Activated CD8-positive, alpha-beta memory T cell treated with anti-CD3 and anti-CD28 coated beads, Interleukin-2, amount 10 ng/mL, durations not matched to agents 7 days and 5 days (primary cell): ENCODE measurements at regions of chr13 and their contacts with region 1.

Region 1: DNA sequence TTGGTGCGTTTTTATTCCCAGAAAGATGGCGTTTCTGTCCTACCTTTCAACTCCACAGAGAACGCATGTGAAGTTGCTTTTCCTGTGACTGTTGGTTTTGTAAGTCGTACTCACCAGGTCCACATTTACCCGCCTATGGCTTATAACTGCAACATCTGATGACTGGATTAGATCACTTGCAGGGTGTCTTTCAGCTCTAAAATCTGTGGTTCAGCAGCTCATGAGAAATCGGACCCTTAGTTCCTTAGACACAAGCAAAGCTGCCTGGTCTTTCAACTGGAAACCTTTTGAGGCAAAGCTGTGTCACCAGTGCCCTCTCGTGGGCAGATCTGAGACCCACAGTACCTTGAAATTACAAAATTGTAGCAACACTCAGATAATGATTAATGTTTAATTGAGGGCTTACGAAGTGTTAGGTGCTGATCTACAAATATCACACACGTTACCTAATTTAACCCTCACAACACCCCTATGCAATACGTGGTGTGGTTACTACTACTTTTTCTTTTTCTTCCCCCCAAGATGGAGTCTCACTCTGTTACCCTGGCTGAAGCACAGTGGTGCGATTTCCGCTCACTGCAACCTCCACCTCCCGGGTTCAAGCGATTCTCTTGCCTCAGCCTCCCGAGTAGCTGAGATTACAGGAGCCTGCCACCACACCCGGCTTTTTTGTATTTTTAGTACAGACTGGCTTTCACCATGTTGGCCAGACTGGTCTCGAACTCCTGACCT is 65.4 kb downstream of the RUBCNL start:
- DNase-seq: peak; percentile 83
- ATAC-seq: peak; percentile 88
- H3K4me3 Mint-ChIP-seq: peak overlapping the region; percentile 62
- H3K27ac Mint-ChIP-seq: peak overlapping the region; percentile 87
- H3K4me1 Mint-ChIP-seq: peaks cover 18% of the 10 kb centered on the region
- H3K27me3 Mint-ChIP-seq: no peaks in the 10 kb centered on the region

Region 2: GRCh38 chr13:45807520-45808099 is 514.0 kb before region 1 on chr13:
- CTCF ChIA-PET with region 1: interaction called, 10 read pairs
- DNase-seq: peak; percentile 51
- ATAC-seq: peak; percentile 53
- H3K4me3 Mint-ChIP-seq: no peak overlapping the region
- H3K27ac Mint-ChIP-seq: no peak overlapping the region
- H3K4me1 Mint-ChIP-seq: peaks cover 4% of the 10 kb centered on the region
- H3K27me3 Mint-ChIP-seq: no peaks in the 10 kb centered on the region

Region 3: DNA sequence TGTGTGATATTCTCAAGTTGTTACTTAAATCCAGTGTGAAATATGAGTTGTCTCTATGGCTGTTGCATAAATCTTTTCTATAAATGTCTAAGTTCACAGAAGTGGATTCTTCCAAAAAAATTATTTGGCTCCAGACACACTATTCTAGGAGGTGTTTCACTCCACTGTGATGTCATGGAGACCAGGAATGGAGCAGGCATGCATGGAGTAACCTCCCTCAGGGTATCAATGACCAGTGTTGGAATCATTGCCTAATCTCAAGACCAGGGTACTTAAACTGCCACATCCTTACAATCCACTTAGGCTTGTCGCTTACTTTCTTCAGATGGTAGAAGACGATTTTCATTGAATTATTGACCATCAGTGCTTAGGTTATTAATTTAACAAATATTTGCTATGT is 54.5 kb before region 1 on chr13:
- CTCF ChIA-PET with region 1: no interaction called
- DNase-seq: no peak
- ATAC-seq: no peak
- H3K4me3 Mint-ChIP-seq: no peak overlapping the region
- H3K27ac Mint-ChIP-seq: no peak overlapping the region
- H3K4me1 Mint-ChIP-seq: no peaks in the 10 kb centered on the region
- H3K27me3 Mint-ChIP-seq: peaks cover 11% of the 10 kb centered on the region

Region 4: DNA sequence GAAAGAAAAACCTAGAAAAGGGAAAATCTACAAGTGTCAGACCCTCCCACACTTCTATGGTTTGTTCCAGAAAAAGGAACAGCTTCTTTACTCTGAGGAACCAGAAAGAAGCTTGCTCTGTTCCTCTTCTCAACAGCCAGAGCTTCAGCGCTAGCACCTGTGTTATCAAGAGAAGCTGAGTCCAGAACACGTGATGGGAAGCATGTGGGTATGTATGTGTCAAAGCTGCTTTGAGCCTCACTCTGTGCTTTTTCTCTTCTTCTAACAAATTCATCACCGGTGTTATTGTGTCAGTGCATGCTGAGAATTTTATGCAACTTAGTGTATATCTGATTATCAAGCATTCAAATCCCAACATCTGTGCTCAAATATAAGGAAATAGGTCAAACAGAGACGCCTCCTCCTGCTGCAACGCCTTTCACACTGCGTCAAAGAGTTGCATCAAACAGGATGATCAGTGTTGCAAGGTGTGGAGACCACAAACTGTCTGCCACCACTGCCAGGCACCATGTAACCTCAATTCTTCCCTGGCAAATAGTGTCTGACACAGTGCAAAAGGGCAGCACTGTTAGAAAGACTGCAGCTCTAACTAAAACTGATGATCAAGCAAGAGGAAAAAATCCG is 26.1 kb before region 1 on chr13:
- CTCF ChIA-PET with region 1: interaction called, 11 read pairs
- DNase-seq: peak; percentile 87
- ATAC-seq: peak; percentile 91
- H3K4me3 Mint-ChIP-seq: peak overlapping the region; percentile 55
- H3K27ac Mint-ChIP-seq: peak overlapping the region; percentile 94
- H3K4me1 Mint-ChIP-seq: peaks cover 40% of the 10 kb centered on the region
- H3K27me3 Mint-ChIP-seq: no peaks in the 10 kb centered on the region

Region 5: GRCh38 chr13:46350003-46350402 is 28.3 kb after region 1 on chr13:
- CTCF ChIA-PET with region 1: no interaction called
- DNase-seq: no peak
- ATAC-seq: no peak
- H3K4me3 Mint-ChIP-seq: no peak overlapping the region
- H3K27ac Mint-ChIP-seq: no peak overlapping the region
- H3K4me1 Mint-ChIP-seq: peaks cover 14% of the 10 kb centered on the region
- H3K27me3 Mint-ChIP-seq: no peaks in the 10 kb centered on the region